Ascending aorta (tissue), 2 donors: ENCODE measurements at regions of chr3 and their contacts with region 1.

Region 1: GRCh38 chr3:48556793-48557626 is at the start of gene PFKFB4:
- DNase-seq: peak; percentile 99 to 100
- H3K4me3 ChIP-seq: peak within 1 kb of the TSS; percentile 57 to 83
- H3K27ac ChIP-seq: peak within 1 kb of the TSS; percentile 44 to 84
- H3K4me1 ChIP-seq: peaks cover 15 to 34% of the 10 kb centered on the region in 2 donors
- H3K27me3 ChIP-seq: no peaks in the 10 kb centered on the region
- CTCF ChIP-seq: peak in 1 of 3 experiments; percentile 5
- total RNA-seq, gene PFKFB4: 3.7 TPM

Region 2: GRCh38 chr3:48465531-48466378 is 91.3 kb before region 1 on chr3:
- intact Hi-C with region 1: loop called (anchors 2 kb)
- DNase-seq: peak; percentile 100
- H3K4me3 ChIP-seq: peak overlapping the region; percentile 60 to 71
- H3K27ac ChIP-seq: peak overlapping the region; percentile 96 to 98
- H3K4me1 ChIP-seq: peaks cover 16 to 43% of the 10 kb centered on the region in 2 donors
- H3K27me3 ChIP-seq: no peaks in the 10 kb centered on the region
- CTCF ChIP-seq: peak; percentile 87 to 94 (median 89)

Region 3: GRCh38 chr3:48595526-48596121 is 38.6 kb after region 1 on chr3:
- intact Hi-C with region 1: loop called (anchors 1 kb)
- DNase-seq: peak; percentile 66 to 91
- H3K4me3 ChIP-seq: peak overlapping the region; percentile 44 to 73
- H3K27ac ChIP-seq: peak overlapping the region; percentile 94 to 95
- H3K4me1 ChIP-seq: peaks cover 24 to 50% of the 10 kb centered on the region in 2 donors
- H3K27me3 ChIP-seq: no peaks in the 10 kb centered on the region
- CTCF ChIP-seq: no peak

Region 4: DNA sequence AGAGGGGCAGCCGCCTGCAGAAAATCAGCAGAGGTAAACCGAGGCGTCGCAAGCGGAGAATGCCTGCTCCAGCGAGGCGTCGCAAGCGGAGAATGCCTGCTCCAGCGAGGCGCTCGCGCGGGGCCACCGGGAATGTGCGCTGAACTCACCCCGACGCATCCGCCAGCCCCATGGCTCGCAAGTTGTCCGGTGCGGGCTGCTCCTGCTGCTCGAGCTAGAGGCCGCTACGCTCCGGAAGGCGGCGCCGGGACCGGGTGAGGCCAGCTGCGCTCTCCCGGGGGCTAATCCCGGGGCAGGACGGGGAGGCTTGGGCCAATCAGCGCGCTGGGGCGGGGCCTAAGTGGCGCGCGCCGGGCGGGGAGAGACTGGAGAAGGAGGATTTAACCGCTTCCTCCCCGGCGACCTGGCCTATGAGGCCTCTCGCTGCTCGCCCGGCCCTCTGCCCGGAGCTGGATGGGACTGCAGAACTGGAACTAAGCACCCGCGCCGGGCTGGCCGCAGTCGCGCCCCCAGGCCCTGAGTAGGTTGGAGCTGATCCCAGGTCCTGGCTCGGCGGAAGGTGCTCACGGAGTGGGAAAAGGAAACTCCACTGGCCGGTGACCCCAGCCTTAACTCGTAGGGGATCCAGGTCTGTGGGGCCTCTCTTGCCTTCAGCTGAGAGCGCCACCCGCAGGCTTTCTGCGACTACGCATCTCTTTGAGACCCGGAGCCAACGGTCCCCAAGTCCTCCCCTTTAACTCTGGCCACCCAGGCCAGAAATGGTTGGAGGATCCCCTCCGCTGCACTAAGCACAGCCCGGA is 78.4 kb after region 1 on chr3 and contains the start of gene SLC26A6:
- intact Hi-C with region 1: loop called (anchors 1 kb)
- DNase-seq: peak; percentile 90 to 98
- H3K4me3 ChIP-seq: peak within 1 kb of the TSS; percentile 95 to 97
- H3K27ac ChIP-seq: peak within 1 kb of the TSS; percentile 80 to 81
- H3K4me1 ChIP-seq: peaks cover 0 to 22% of the 10 kb centered on the region in 2 donors
- H3K27me3 ChIP-seq: no peaks in the 10 kb centered on the region
- CTCF ChIP-seq: peak; percentile 34 to 62 (median 40)
- total RNA-seq, gene SLC26A6: 28.1 TPM

Region 5: GRCh38 chr3:48685602-48686511 is 128.8 kb after region 1 on chr3 and contains the start of gene NCKIPSD:
- intact Hi-C with region 1: loop called (anchors 5 kb)
- DNase-seq: peak; percentile 50 to 93
- H3K4me3 ChIP-seq: peak within 1 kb of the TSS; percentile 81 to 94
- H3K27ac ChIP-seq: peak within 1 kb of the TSS; percentile 86 to 90
- H3K4me1 ChIP-seq: peaks cover 10 to 23% of the 10 kb centered on the region in 2 donors
- H3K27me3 ChIP-seq: no peaks in the 10 kb centered on the region
- CTCF ChIP-seq: peak; percentile 63 to 96 (median 75)
- total RNA-seq, gene NCKIPSD: 102 TPM

Region 6: DNA sequence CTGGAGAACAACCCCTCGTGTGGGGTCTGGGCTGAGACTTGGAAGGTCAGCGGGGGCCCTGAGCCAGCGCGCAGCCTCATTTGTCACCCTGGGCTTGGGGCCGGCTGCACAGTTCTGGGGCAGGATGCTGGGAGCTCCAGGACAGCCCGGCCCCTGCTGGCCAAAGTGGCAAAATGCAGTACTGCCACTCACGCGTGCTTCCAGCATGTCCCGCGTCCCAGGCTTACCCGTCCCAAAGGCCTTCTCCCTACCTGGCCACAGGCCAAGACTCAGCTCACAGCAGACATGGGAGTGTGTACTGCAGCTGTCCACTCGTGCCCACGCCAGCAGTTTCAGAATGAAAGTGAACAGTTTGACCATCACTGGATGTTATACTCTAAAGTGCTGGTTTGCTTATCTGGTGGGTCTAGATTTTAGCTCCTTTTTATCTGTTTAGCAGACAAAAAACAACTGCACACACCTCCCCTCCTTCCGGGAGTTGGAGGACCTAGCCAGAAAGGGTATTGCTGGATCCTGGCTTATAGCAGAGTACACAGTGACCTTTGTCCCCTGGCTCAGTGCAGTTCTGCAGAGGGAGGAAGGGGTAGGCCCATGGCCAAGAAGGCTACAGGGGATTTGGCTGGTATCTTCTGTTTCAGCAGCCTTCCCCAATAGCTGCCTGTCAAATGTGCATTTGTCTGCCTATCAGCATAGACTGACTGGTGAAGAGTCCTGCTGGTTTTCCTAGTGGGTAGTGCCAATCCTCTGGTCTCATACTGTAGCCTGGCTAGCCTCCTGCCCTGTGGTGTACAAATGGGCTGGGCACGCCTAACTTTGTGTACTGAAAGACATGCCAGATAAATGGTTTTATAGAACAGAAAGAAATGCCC is 183.2 kb after region 1 on chr3:
- intact Hi-C with region 1: no loop called
- DNase-seq: peak; percentile 47 to 92
- H3K4me3 ChIP-seq: peak overlapping the region in 1 of 2 donors; percentile 27
- H3K27ac ChIP-seq: peak overlapping the region; percentile 73 to 77
- H3K4me1 ChIP-seq: peaks cover 7 to 10% of the 10 kb centered on the region in 2 donors
- H3K27me3 ChIP-seq: no peaks in the 10 kb centered on the region
- CTCF ChIP-seq: peak; percentile 84 to 90 (median 89)